ENCODE measurements at regions of chr2 and their contacts with region 1.

Region 1: GRCh38 chr2:234981197-234982117 is 29.6 kb downstream of the SH3BP4 start:
- DNase-seq: peak; percentile 86
- ATAC-seq: peak; percentile 82
- H3K4me3 ChIP-seq: peak overlapping the region; percentile 30 to 49
- H3K27ac ChIP-seq: peak overlapping the region; percentile 90
- H3K4me1 ChIP-seq: peaks cover 93% of the 10 kb centered on the region
- H3K27me3 ChIP-seq: no peaks in the 10 kb centered on the region
- CTCF ChIP-seq: no peak

Region 2: DNA sequence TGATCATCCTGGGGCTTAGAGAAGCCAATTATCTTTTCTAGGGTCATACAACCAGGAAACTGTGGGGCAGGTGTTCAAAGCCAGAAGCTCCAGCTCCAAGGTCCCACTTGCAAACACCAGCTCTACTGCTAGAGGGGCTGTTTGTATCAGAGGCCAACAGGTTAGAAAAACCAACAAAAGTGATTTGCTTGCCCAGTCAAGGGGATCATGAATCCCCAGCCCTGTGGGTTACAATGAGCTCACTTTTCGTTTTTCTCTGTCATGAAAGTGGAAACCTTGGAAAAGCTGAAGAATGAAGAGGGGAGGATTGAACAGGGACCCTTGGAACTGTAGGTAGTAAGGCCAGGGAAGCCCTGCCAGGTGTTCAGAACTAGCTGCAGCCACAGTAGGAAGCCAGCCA is 811.8 kb before region 1 on chr2:
- CTCF ChIA-PET with region 1: interaction called, 10 read pairs
- POLR2A ChIA-PET with region 1: no interaction called
- in situ Hi-C with region 1: no loop called
- intact Hi-C with region 1: no loop called
- DNase-seq: no peak
- ATAC-seq: peak; percentile 35
- H3K4me3 ChIP-seq: no peak overlapping the region
- H3K27ac ChIP-seq: peak overlapping the region; percentile 86
- H3K4me1 ChIP-seq: peaks cover 18% of the 10 kb centered on the region
- H3K27me3 ChIP-seq: no peaks in the 10 kb centered on the region
- CTCF ChIP-seq: no peak

Region 3: GRCh38 chr2:234705108-234705507 is 276.3 kb before region 1 on chr2:
- CTCF ChIA-PET with region 1: no interaction called
- POLR2A ChIA-PET with region 1: no interaction called
- in situ Hi-C with region 1: no loop called
- intact Hi-C with region 1: no loop called
- DNase-seq: no peak
- ATAC-seq: no peak
- H3K4me3 ChIP-seq: no peak overlapping the region
- H3K27ac ChIP-seq: no peak overlapping the region
- H3K4me1 ChIP-seq: no peaks in the 10 kb centered on the region
- H3K27me3 ChIP-seq: no peaks in the 10 kb centered on the region
- CTCF ChIP-seq: no peak

Measured in Panc1 (cell line).